ENCODE measurements at regions of chr1 and their contacts with region 1.

Region 1: DNA sequence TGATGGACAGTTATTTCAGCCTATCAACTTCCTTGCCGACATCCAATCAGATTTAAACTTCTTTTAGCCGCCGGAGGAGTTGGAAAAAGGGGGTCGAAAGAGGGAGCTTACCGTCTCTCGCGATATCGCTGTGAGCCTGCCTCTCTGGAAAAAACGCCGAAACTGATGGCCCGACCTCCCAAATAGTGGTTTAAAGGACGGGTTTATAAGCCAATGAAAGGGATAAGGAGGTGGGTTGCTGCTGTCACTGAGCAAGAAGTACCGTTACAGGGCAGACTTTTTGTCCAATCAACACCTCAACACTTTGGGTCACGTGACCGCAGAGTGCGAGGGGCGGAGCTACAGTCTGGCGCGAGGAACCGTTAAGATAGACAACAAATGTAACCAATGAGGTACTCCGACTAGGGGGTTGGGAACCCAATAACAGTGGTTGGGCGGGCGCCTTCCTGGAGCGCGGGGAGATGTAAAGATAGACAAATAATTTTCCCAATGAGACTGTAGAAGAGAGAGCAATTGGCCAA is at the start of gene RBM15:
- DNase-seq: peak; percentile 77 to 100 (median 99)
- ATAC-seq: peak; percentile 84
- H3K4me3 ChIP-seq: peak within 1 kb of the TSS; percentile 94
- H3K4me3 Mint-ChIP-seq: no peak within 1 kb of the TSS
- H3K27ac ChIP-seq: peak within 1 kb of the TSS; percentile 96
- H3K27ac Mint-ChIP-seq: peak within 1 kb of the TSS in 1 of 9 donors; percentile 97
- H3K4me1 ChIP-seq: peaks cover 40 to 41% of the 10 kb centered on the region in 2 donors
- H3K4me1 Mint-ChIP-seq: peaks cover 37 to 64% (median 61%) of the 10 kb centered on the region in 7 donors
- H3K27me3 ChIP-seq: no peaks in the 10 kb centered on the region
- H3K27me3 Mint-ChIP-seq: peaks cover 0 to 2% (median 0%) of the 10 kb centered on the region in 5 donors
- total RNA-seq, gene RBM15: 36.4 to 58.6 (median 46.3) TPM

Region 2: DNA sequence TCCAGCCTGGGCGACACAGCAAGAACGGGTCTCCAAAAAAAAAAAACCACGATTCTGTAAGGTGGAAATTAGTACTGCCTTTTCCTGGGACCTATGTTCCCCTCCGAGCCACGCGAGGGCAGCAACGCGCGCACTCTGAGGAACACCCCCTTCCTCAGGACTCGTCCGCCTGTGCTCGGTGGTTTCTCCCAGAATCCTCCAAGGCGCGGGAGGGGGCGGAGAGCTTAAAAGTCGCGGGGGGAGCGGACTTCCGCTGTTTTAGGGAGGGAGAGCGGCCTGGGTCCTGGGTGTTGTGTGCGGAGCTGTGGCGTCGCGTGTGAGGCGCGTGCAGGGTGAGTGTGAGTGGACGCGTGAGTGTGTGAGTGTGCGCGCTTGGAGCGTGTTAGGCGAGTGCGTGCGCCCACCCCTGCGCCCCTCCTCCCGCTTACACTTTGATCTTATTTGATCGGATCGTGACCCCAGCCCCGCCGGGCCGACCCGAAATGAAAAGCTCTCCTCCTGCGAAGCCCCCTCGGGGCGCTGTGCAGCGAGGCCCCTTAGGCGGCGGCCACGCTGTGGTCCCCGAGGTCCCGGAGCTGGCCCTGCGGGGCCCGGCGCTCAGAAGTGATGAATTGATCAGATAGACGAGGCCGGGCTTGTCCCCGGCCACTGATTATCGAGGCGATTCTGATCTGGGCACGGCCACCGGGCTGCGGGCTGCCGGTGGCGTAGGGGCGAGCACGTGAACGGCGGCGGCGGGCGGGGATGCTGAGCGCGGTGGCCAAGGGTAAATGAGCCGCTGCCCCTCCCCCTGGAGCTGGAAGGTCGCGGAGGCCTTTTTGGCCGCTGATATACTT is 1238.8 kb before region 1 on chr1:
- CTCF ChIA-PET with region 1: no interaction called
- POLR2A ChIA-PET with region 1: no interaction called
- intact Hi-C with region 1: loop called in 1 of 2 experiments (anchors 5 kb)
- DNase-seq: peak; percentile 90 to 98 (median 97)
- ATAC-seq: peak; percentile 98
- H3K4me3 ChIP-seq: peak overlapping the region; percentile 80
- H3K4me3 Mint-ChIP-seq: peak overlapping the region; percentile 93 to 99 (median 98)
- H3K27ac ChIP-seq: peak overlapping the region; percentile 88
- H3K27ac Mint-ChIP-seq: peak overlapping the region; percentile 92 to 99 (median 96)
- H3K4me1 ChIP-seq: peaks cover 0 to 5% of the 10 kb centered on the region in 2 donors
- H3K4me1 Mint-ChIP-seq: peaks cover 5 to 22% (median 13%) of the 10 kb centered on the region in 7 donors
- H3K27me3 ChIP-seq: no peaks in the 10 kb centered on the region
- H3K27me3 Mint-ChIP-seq: peaks cover 0 to 2% (median 0%) of the 10 kb centered on the region in 5 donors

Region 3: GRCh38 chr1:109667452-109668122 is 671.4 kb before region 1 on chr1 and contains the start of gene GSTM2:
- CTCF ChIA-PET with region 1: no interaction called
- POLR2A ChIA-PET with region 1: no interaction called
- intact Hi-C with region 1: loop called in 1 of 2 experiments (anchors 2 kb)
- DNase-seq: peak; percentile 49 to 87 (median 82)
- ATAC-seq: peak; percentile 100
- H3K4me3 ChIP-seq: peak within 1 kb of the TSS; percentile 52
- H3K4me3 Mint-ChIP-seq: peak within 1 kb of the TSS; percentile 75 to 92 (median 84)
- H3K27ac ChIP-seq: peak within 1 kb of the TSS; percentile 49
- H3K27ac Mint-ChIP-seq: peak within 1 kb of the TSS; percentile 38 to 90 (median 77)
- H3K4me1 ChIP-seq: peaks cover 0 to 11% of the 10 kb centered on the region in 2 donors
- H3K4me1 Mint-ChIP-seq: peaks cover 17 to 30% (median 24%) of the 10 kb centered on the region in 7 donors
- H3K27me3 ChIP-seq: no peaks in the 10 kb centered on the region
- H3K27me3 Mint-ChIP-seq: no peaks in the 10 kb centered on the region
- total RNA-seq, gene GSTM2: 52.2 to 201 (median 109) TPM

Region 4: DNA sequence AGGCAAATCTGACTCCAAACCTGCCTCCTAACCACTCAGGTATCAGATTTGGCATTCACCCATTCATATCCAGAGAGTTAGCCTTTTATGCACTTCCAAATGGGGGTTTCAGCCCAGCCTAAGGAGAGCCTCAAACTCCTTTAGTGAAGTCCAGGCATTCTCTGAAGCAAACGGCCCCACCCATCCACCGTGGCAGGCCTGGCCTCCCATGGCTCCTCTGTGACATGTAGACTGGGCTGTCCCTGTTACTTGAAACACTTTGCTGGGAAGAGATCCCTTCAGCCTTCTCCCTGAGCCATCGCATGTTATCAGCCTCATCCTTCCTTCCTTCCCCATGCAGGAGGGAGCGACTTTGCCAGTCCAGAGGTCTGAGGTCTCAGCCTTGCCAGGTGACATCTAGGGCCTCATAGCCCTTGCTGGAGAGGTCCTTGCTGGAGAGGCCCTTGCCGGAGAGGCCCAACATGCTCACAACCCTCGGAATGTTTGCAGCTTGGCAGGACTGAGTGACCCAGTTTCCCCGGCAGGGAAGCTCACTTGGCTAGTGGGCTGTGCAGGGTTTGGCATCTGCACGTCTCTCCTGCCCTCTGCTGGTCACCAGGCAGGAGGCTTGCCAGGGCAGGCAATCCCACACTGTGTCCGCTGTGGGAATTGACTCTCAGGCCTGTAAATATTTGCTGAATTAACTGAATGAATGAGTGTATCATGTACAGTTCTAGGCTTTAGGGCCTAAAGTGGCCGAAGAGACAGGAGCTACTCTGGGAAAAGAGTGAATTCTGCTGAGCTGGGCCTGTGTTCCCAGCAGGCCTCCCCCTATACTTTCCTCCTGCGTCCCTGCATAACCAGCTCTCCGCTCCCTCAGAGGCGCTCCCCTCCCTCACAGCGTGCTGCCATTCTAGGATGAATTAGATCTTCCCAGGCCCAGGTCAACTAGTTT is 26.5 kb before region 1 on chr1:
- CTCF ChIA-PET with region 1: interaction called, 8 read pairs
- POLR2A ChIA-PET with region 1: interaction called, 11 read pairs
- intact Hi-C with region 1: no loop called
- DNase-seq: peak; percentile 51 to 80 (median 71)
- ATAC-seq: peak; percentile 95
- H3K4me3 ChIP-seq: no peak overlapping the region
- H3K4me3 Mint-ChIP-seq: no peak overlapping the region
- H3K27ac ChIP-seq: no peak overlapping the region
- H3K27ac Mint-ChIP-seq: peak overlapping the region in 1 of 9 donors; percentile 14
- H3K4me1 ChIP-seq: peaks cover 0 to 5% of the 10 kb centered on the region in 2 donors
- H3K4me1 Mint-ChIP-seq: peaks cover 0 to 2% (median 0%) of the 10 kb centered on the region in 7 donors
- H3K27me3 ChIP-seq: no peaks in the 10 kb centered on the region
- H3K27me3 Mint-ChIP-seq: no peaks in the 10 kb centered on the region

Region 5: DNA sequence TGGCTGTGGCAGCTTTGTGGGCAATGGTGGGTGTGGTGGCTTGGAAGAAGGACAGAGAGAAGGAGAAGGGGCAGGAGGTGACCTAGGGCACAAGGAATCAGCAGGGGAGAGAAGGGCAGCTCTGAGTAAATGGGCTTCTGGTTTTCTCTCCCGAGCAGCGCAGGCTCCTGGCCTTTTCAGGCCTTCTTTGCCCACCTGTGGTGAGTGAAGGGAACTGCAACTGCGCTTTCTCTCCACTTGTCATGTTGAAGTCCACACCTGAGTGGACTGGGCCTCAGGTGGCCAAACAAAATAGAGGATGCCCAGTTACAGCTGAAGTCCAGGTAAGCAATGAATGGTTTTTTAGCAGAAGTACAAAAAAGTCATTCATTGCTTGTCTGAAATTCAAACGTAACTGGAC is 209.4 kb after region 1 on chr1:
- CTCF ChIA-PET with region 1: no interaction called
- POLR2A ChIA-PET with region 1: no interaction called
- intact Hi-C with region 1: no loop called
- DNase-seq: no peak
- ATAC-seq: no peak
- H3K4me3 ChIP-seq: no peak overlapping the region
- H3K4me3 Mint-ChIP-seq: no peak overlapping the region
- H3K27ac ChIP-seq: no peak overlapping the region
- H3K27ac Mint-ChIP-seq: no peak overlapping the region
- H3K4me1 ChIP-seq: no peaks in the 10 kb centered on the region
- H3K4me1 Mint-ChIP-seq: no peaks in the 10 kb centered on the region
- H3K27me3 ChIP-seq: no peaks in the 10 kb centered on the region
- H3K27me3 Mint-ChIP-seq: peaks cover 20 to 50% (median 39%) of the 10 kb centered on the region in 5 donors

Region 6: DNA sequence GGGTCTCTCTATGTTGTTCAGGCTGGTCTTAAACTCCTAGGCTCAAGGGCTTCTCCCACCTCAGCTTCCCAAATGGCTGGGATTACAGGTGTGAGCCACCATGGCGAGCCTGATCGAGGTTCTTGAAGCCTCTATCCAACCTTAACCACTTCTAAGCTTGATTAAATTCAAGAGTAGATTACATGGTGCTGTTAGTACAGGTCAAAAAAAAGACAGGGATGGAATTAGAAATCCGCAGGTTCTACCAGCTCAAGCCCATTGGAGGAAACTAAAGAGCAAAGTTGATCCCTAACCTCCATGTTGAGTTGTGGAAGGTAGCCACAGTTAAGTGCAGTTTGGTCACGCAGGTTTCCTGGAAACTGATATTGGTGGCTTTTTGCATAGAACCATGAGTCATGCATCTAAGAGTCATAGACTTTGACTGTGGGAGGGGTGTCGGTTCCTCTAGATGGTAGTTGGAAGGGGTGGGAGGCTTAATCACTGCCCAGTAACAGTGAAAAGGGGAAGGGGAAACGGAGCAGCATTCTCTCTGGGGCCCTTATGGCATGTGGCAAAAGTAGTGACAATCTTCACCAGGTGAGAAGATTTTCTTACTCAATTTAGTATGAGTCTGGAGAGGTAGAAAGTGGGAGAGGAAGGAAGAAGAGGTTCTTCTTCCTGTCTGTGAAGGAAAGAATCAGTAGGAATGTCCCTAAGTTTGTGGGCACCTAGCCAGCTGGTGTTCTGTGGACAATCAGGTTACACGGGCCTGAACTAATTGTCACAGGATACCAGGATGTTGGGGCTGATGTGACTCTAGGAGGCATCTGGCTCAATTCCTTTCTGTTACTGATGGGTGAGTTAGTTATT is 541.0 kb after region 1 on chr1:
- CTCF ChIA-PET with region 1: no interaction called
- POLR2A ChIA-PET with region 1: interaction called, 3 read pairs
- intact Hi-C with region 1: loop called in 1 of 2 experiments (anchors 5 kb)
- DNase-seq: peak in 2 of 9 donors; percentile 63 to 65
- ATAC-seq: peak; percentile 73
- H3K4me3 ChIP-seq: peak overlapping the region; percentile 41
- H3K4me3 Mint-ChIP-seq: peak overlapping the region; percentile 78 to 96 (median 88)
- H3K27ac ChIP-seq: peak overlapping the region; percentile 44
- H3K27ac Mint-ChIP-seq: peak overlapping the region; percentile 89 to 99 (median 93)
- H3K4me1 ChIP-seq: peaks cover 69 to 77% of the 10 kb centered on the region in 2 donors
- H3K4me1 Mint-ChIP-seq: peaks cover 71 to 96% (median 85%) of the 10 kb centered on the region in 7 donors
- H3K27me3 ChIP-seq: no peaks in the 10 kb centered on the region
- H3K27me3 Mint-ChIP-seq: no peaks in the 10 kb centered on the region

Region 7: GRCh38 chr1:110936567-110936966 is 597.6 kb after region 1 on chr1:
- CTCF ChIA-PET with region 1: no interaction called
- POLR2A ChIA-PET with region 1: no interaction called
- intact Hi-C with region 1: no loop called
- DNase-seq: no peak
- ATAC-seq: no peak
- H3K4me3 ChIP-seq: no peak overlapping the region
- H3K4me3 Mint-ChIP-seq: no peak overlapping the region
- H3K27ac ChIP-seq: no peak overlapping the region
- H3K27ac Mint-ChIP-seq: no peak overlapping the region
- H3K4me1 ChIP-seq: no peaks in the 10 kb centered on the region
- H3K4me1 Mint-ChIP-seq: no peaks in the 10 kb centered on the region
- H3K27me3 ChIP-seq: no peaks in the 10 kb centered on the region
- H3K27me3 Mint-ChIP-seq: peaks cover 0 to 9% (median 0%) of the 10 kb centered on the region in 5 donors

Region 8: GRCh38 chr1:111448918-111449702 is 1110.2 kb after region 1 on chr1 and contains the starts of genes ATP5PB and WDR77:
- CTCF ChIA-PET with region 1: no interaction called
- POLR2A ChIA-PET with region 1: interaction called, 4 read pairs
- intact Hi-C with region 1: loop called (anchors 1 kb)
- DNase-seq: peak; percentile 66 to 97 (median 94)
- ATAC-seq: peak; percentile 98
- H3K4me3 ChIP-seq: peak within 1 kb of the TSS; percentile 89
- H3K4me3 Mint-ChIP-seq: peak within 1 kb of the TSS; percentile 97 to 100 (median 100)
- H3K27ac ChIP-seq: peak within 1 kb of the TSS; percentile 98
- H3K27ac Mint-ChIP-seq: peak within 1 kb of the TSS; percentile 95 to 100 (median 99)
- H3K4me1 ChIP-seq: peaks cover 51 to 55% of the 10 kb centered on the region in 2 donors
- H3K4me1 Mint-ChIP-seq: peaks cover 43 to 92% (median 78%) of the 10 kb centered on the region in 7 donors
- H3K27me3 ChIP-seq: no peaks in the 10 kb centered on the region
- H3K27me3 Mint-ChIP-seq: no peaks in the 10 kb centered on the region
- total RNA-seq, gene ATP5PB: 64.9 to 298 (median 98.7) TPM
- total RNA-seq, gene WDR77: 20.7 to 39.9 (median 29.5) TPM